Ovary (tissue), 10 donors: ENCODE measurements at regions of chr2 and their contacts with region 1.

Region 1: GRCh38 chr2:118855451-118856279 is 8.2 kb upstream of the EN1 start:
- DNase-seq: peak; percentile 45 to 83 (median 75)
- H3K4me3 ChIP-seq: peak overlapping the region; percentile 18
- H3K27ac ChIP-seq: no peak overlapping the region
- H3K4me1 ChIP-seq: no peaks in the 10 kb centered on the region
- H3K27me3 ChIP-seq: no peaks in the 10 kb centered on the region
- CTCF ChIP-seq: peak; percentile 70 to 80 (median 73)
- EP300 ChIP-seq: no peak
- POLR2A ChIP-seq: no peak

Region 2: GRCh38 chr2:118046634-118047210 is 808.9 kb before region 1 on chr2:
- intact Hi-C with region 1: loop called in 3 of 4 experiments (anchors 5 kb)
- DNase-seq: no peak
- H3K4me3 ChIP-seq: no peak overlapping the region
- H3K27ac ChIP-seq: no peak overlapping the region
- H3K4me1 ChIP-seq: no peaks in the 10 kb centered on the region
- H3K27me3 ChIP-seq: no peaks in the 10 kb centered on the region
- CTCF ChIP-seq: peak in 2 of 3 donors; percentile 29 to 38
- EP300 ChIP-seq: no peak
- POLR2A ChIP-seq: no peak

Region 3: GRCh38 chr2:118221666-118222594 is 633.7 kb before region 1 on chr2:
- intact Hi-C with region 1: loop called (anchors 5 to 10 kb)
- DNase-seq: peak in 1 of 5 donors; percentile 21
- H3K4me3 ChIP-seq: no peak overlapping the region
- H3K27ac ChIP-seq: no peak overlapping the region
- H3K4me1 ChIP-seq: no peaks in the 10 kb centered on the region
- H3K27me3 ChIP-seq: no peaks in the 10 kb centered on the region
- CTCF ChIP-seq: peak; percentile 14 to 33 (median 30)
- EP300 ChIP-seq: no peak
- POLR2A ChIP-seq: no peak

Region 4: DNA sequence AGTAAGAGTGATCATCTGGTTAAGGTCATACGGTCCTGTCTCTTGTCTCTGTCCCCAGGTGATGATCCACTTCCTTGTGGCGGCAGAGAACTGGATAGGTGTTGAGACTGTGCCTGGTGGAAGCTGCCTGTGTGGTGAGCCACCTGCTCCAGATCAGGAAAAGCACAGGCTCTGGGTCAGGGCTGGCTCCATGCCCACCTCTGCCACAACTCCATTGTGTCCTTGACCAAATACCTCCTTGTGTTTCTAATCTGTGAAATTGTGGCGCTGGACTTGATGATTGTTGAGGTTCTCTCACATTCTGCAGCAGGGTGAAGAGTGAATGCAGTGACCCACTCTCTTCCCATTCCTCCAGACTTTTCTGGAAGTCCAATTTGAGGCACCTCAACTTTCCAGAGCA is 37.4 kb after region 1 on chr2:
- intact Hi-C with region 1: no loop called
- DNase-seq: no peak
- H3K4me3 ChIP-seq: no peak overlapping the region
- H3K27ac ChIP-seq: no peak overlapping the region
- H3K4me1 ChIP-seq: no peaks in the 10 kb centered on the region
- H3K27me3 ChIP-seq: no peaks in the 10 kb centered on the region
- CTCF ChIP-seq: no peak
- EP300 ChIP-seq: no peak
- POLR2A ChIP-seq: no peak